HEK293T (cell line): ENCODE measurements at regions of chr14 and their contacts with region 1.

Region 1: DNA sequence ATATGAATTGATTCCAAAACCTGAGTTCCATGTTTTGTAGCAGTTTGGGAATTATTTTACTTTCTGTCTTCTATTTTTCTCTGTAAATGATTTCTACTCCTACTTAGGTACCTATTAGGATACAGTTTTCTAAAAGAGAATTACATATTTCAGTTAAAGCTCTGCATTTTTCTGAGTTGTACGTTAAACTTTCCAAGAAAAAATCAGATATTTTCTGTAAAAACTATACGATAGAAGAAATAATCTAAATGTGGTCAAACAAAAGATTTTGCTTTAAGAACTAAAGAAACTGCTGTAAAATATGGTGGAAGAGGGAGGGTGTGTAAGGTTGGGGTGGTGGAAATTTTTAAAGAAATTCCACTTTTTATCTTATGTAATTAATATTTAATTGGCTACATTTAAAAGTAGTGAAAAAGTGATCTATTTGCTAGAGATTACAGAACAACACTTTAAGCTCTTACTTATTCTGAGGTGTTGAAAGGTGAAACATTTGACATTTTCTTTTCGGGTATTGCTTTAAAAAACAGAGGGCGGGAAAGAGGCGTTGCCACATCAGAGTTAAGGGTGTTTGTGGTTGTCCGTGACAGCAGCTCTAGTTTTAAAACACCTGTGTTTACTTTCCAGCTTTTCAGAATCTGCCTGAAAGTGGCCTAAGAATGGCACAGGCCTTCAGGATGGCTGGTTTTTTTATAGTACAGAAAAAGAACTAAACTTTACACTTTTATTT is 187.3 kb downstream of the MIPOL1 start:
- DNase-seq: no peak

Region 2: GRCh38 chr14:37399517-37399916 is 14.5 kb after region 1 on chr14:
- CTCF ChIA-PET with region 1: no interaction called
- POLR2A ChIA-PET with region 1: no interaction called
- DNase-seq: no peak

Region 3: GRCh38 chr14:37816135-37816534 is 431.1 kb after region 1 on chr14:
- CTCF ChIA-PET with region 1: interaction called, 12 read pairs
- POLR2A ChIA-PET with region 1: no interaction called
- DNase-seq: no peak